Naive thymus-derived CD4-positive, alpha-beta T cell (primary cell): ENCODE measurements at regions of chr1 and their contacts with region 1.

Region 1: GRCh38 chr1:116168277-116169097 is 57.3 kb downstream of the MAB21L3 start:
- DNase-seq: peak; percentile 74 to 88 (median 83)
- ATAC-seq: peak; percentile 97
- H3K4me3 ChIP-seq: peak overlapping the region; percentile 75
- H3K4me3 Mint-ChIP-seq: peak overlapping the region; percentile 70 to 90 (median 88)
- H3K27ac ChIP-seq: peak overlapping the region; percentile 60
- H3K27ac Mint-ChIP-seq: peak overlapping the region; percentile 81 to 96 (median 92)
- H3K4me1 ChIP-seq: peaks cover 9% of the 10 kb centered on the region in 2 donors
- H3K4me1 Mint-ChIP-seq: peaks cover 14 to 23% (median 19%) of the 10 kb centered on the region in 7 donors
- H3K27me3 ChIP-seq: no peaks in the 10 kb centered on the region
- H3K27me3 Mint-ChIP-seq: peaks cover 0 to 14% (median 0%) of the 10 kb centered on the region in 5 donors

Region 2: DNA sequence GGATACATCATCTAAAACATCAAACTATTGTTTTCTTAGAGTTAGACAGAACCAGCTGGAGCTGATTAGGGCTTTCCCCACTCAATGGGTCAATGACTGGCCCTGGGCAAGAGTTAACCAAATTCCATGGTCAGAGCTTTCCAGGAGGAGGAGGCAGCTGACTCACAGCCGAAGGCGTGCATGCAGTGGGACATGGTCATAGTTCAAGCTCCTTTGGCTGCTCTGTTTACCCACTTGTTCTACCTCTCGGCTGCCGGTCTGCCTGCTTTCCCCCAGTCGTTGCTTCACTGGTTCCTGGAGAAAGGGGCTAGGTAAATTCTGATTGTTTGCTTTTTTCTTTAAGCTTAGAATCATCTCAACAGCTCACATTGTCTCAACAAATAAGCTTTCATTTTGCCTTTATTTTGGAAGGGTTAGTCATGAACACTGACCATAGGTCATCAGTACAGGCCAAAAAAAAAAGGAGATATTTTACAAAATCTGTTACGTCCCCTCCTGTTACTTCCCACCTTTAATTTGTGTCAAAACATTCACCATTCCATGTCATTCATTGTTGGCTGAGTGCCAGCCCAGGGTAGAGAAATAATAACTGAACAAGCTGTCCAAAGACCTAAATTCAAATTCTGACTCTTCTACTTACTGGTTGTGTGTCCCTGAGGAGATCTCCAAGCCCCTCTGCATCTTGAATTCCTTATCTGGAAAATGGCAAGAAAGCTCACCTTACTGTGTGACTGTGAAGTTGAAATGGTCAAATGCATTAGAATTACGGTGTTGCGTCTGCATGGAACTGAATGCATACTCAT is 45.3 kb before region 1 on chr1:
- CTCF ChIA-PET with region 1: no interaction called
- POLR2A ChIA-PET with region 1: no interaction called
- intact Hi-C with region 1: no loop called
- DNase-seq: no peak
- ATAC-seq: no peak
- H3K4me3 ChIP-seq: no peak overlapping the region
- H3K4me3 Mint-ChIP-seq: no peak overlapping the region
- H3K27ac ChIP-seq: no peak overlapping the region
- H3K27ac Mint-ChIP-seq: no peak overlapping the region
- H3K4me1 ChIP-seq: peaks cover 4 to 5% of the 10 kb centered on the region in 2 donors
- H3K4me1 Mint-ChIP-seq: peaks cover 3 to 27% (median 24%) of the 10 kb centered on the region in 7 donors
- H3K27me3 ChIP-seq: no peaks in the 10 kb centered on the region
- H3K27me3 Mint-ChIP-seq: peaks cover 0 to 36% (median 7%) of the 10 kb centered on the region in 5 donors

Region 3: DNA sequence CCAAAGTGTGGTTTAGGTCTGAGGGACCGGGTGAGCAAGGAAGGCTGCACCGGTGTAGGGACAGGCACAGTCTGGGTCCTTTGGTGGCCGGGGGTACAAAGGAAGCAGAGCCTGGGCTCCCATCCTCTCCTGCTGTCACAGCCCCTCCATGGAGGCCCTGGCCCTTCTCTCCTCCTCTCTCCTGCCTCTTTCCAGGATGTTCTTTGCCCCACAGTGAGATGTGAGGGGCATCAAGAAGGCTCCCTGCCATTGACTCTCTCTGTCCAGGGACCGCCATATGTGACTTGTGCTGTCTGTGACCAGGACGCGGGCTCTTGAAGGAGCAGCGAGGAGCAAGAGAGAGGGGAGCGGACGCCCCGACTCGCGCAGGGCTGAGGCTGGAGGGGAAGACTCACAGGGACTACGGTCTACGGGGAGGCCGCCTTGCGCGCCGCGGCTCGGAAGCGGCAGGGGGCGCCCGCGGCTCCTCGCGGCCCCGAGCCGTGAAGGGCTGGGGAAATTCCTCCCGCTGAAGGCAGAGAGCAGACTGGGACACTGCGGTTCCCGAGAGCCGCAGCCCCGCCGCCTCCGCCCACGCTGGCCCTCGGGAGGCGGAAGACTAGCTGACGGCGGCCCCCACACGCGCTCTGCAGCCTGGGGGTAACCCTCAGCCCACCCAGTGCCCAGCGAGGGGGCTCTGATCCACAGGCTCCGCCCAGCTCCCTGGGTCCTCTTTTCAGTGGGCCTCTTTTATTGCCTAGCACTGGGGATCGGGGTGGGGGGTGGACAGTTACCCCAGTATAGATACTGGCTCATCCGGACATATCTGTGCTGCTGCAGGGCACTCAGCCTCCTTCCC is 16.5 kb before region 1 on chr1:
- CTCF ChIA-PET with region 1: interaction called, 7 read pairs
- POLR2A ChIA-PET with region 1: interaction called, 12 read pairs
- intact Hi-C with region 1: loop called (anchors 1 kb)
- DNase-seq: peak; percentile 61 to 89 (median 76)
- ATAC-seq: peak; percentile 97
- H3K4me3 ChIP-seq: peak overlapping the region; percentile 48
- H3K4me3 Mint-ChIP-seq: peak overlapping the region; percentile 70 to 87 (median 82)
- H3K27ac ChIP-seq: peak overlapping the region; percentile 74
- H3K27ac Mint-ChIP-seq: peak overlapping the region; percentile 63 to 98 (median 92)
- H3K4me1 ChIP-seq: peaks cover 7 to 21% of the 10 kb centered on the region in 2 donors
- H3K4me1 Mint-ChIP-seq: peaks cover 9 to 32% (median 25%) of the 10 kb centered on the region in 7 donors
- H3K27me3 ChIP-seq: no peaks in the 10 kb centered on the region
- H3K27me3 Mint-ChIP-seq: peaks cover 0 to 31% (median 0%) of the 10 kb centered on the region in 5 donors